AG04450 (cell line): ENCODE measurements at regions of chr3 and their contacts with region 1.

Region 1: DNA sequence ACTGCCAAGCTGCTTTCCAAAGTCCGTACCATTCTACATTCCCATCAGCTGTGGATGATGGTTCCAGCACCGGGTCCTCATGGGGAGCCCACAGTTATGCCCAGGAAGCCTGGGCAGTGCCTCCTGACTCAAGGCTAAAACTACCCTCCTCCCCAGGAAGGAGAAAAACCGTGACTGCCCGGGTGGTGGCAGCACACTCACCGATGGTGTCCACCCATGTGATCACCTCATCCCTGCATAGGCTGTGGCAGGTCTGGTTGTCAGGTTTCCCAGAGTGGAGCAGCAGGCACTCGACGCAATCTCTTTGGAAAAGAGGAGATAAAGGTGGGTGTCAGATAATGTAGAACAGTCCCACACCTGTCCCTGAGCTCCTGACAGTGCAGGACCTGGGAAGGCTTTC is 38.6 kb downstream of the UMPS start:
- DNase-seq: no peak
- H3K4me3 ChIP-seq: no peak overlapping the region
- H3K27ac ChIP-seq: no peak overlapping the region
- H3K27me3 ChIP-seq: no peaks in the 10 kb centered on the region
- CTCF ChIP-seq: no peak

Region 2: DNA sequence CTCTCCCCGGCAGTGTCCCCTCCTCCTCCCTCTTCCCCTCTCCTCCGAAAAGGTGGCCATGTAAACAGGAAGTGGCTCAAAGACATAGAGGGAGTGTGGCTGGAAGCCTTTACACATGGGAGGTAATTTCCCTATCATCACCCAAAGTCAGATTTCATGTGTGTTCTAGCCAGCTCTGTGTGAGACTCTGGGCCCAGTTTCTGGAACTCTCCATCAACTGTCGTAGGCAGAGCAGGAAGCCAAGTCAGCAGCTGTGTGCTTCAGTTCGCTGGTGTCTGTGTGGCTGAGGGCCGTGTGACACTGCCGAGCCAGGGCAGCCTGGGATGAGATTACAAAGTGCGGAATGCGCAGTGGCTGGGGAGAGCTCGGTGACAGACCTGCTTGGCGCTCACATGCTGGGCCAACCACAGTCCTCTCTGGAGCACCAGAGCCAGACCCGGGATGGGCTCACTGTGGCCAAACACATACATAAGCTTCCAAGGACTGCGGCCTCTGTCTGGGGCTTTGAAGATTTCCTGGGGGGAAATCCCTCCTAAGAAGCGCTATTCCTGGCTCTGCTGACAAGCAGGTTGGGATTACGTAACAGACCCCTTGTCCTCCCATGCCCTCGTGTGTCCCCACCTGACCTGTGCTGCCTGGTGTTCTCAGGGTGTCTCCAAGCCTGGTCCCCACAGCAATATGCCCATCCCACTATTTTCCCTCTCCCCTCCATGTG is 12.1 kb after region 1 on chr3:
- CTCF ChIA-PET with region 1: no interaction called
- POLR2A ChIA-PET with region 1: interaction called, 13 read pairs
- DNase-seq: no peak
- H3K4me3 ChIP-seq: no peak overlapping the region
- H3K27ac ChIP-seq: peak overlapping the region; percentile 80
- H3K27me3 ChIP-seq: no peaks in the 10 kb centered on the region
- CTCF ChIP-seq: no peak